A673 (cell line): ENCODE measurements at regions of chr20 and their contacts with region 1.

Region 1: GRCh38 chr20:46089417-46090388 is at the start of gene NCOA5:
- DNase-seq: peak; percentile 98
- H3K4me3 ChIP-seq: peak within 1 kb of the TSS; percentile 87
- H3K27ac ChIP-seq: peak within 1 kb of the TSS; percentile 99
- H3K4me1 ChIP-seq: peaks cover 33% of the 10 kb centered on the region
- H3K27me3 ChIP-seq: no peaks in the 10 kb centered on the region
- CTCF ChIP-seq: peak; percentile 37; the same call in 1 of the 2 replicates
- total RNA-seq, gene NCOA5: 44.1 and 55.4 TPM in 2 replicates

Region 2: GRCh38 chr20:44422083-44422482 is 1667.6 kb before region 1 on chr20:
- CTCF ChIA-PET with region 1: no interaction called
- POLR2A ChIA-PET with region 1: no interaction called
- intact Hi-C with region 1: no loop called
- DNase-seq: no peak
- H3K4me3 ChIP-seq: no peak overlapping the region
- H3K27ac ChIP-seq: no peak overlapping the region
- H3K4me1 ChIP-seq: no peaks in the 10 kb centered on the region
- H3K27me3 ChIP-seq: no peaks in the 10 kb centered on the region
- CTCF ChIP-seq: no peak

Region 3: DNA sequence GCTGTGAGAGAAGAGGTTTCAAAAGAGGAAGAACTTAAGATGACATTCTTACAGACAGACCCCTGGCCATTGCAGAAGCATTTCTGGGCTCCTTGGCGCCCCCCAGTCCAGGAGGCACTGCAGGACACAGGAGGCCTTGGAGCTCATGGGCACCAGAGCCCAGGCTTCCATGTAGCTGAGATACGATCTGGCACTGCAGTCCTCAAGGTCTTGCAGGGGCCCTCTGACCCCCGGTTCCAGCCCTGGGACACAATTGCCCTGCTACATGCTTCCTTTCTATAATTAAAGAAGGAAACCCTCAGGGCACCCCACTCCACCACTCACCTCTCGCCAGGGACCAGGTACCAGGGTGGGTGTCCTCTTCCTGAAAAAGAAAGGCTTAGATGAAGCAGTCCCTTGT is 331.6 kb before region 1 on chr20:
- CTCF ChIA-PET with region 1: no interaction called
- POLR2A ChIA-PET with region 1: no interaction called
- intact Hi-C with region 1: no loop called
- DNase-seq: no peak
- H3K4me3 ChIP-seq: no peak overlapping the region
- H3K27ac ChIP-seq: no peak overlapping the region
- H3K4me1 ChIP-seq: no peaks in the 10 kb centered on the region
- H3K27me3 ChIP-seq: no peaks in the 10 kb centered on the region
- CTCF ChIP-seq: no peak

Region 4: GRCh38 chr20:46022411-46023147 is 67.1 kb before region 1 on chr20:
- CTCF ChIA-PET with region 1: interaction called, 5 read pairs
- POLR2A ChIA-PET with region 1: no interaction called
- intact Hi-C with region 1: loop called (anchors 5 kb)
- DNase-seq: peak; percentile 65
- H3K4me3 ChIP-seq: peak overlapping the region; percentile 92
- H3K27ac ChIP-seq: no peak overlapping the region
- H3K4me1 ChIP-seq: peaks cover 13% of the 10 kb centered on the region
- H3K27me3 ChIP-seq: no peaks in the 10 kb centered on the region
- CTCF ChIP-seq: peak; percentile 81